PC-3 (cell line): ENCODE measurements at regions of chr3 and their contacts with region 1.

Region 1: DNA sequence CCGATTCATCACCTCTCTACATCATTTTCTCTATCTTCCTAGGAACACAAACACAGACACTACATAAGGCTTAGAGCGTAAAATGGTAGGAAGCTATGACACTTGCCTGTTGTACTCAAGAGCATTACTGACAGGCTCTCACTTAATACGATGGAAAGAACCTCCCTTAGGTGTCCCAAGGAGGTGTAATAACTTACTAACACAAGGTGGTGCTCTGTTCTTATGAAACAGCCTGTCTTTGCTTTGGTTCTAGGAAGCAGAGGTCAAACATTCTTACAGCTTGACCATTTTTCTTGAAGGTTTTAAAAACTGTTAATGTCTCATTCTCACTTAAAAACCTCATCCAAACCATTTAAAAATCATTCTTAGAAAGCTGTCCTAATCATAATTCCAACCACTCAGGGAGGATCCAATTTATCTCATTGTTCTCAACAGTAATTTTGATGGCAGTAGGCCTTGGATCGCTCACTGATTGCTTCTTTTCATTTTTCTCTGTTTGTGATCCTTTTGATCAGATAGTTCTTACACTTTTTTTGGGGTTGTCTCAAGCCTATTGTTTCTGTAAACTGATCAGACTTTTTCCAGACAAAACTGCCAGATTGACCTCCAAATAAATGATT is 317.8 kb upstream of the AGTR1 start:
- DNase-seq: peak; percentile 64
- ATAC-seq: peak; percentile 91
- H3K4me3 ChIP-seq: no peak overlapping the region
- H3K27ac ChIP-seq: no peak overlapping the region
- H3K4me1 ChIP-seq: no peaks in the 10 kb centered on the region
- H3K27me3 ChIP-seq: no peaks in the 10 kb centered on the region
- CTCF ChIP-seq: peak; percentile 63

Region 2: DNA sequence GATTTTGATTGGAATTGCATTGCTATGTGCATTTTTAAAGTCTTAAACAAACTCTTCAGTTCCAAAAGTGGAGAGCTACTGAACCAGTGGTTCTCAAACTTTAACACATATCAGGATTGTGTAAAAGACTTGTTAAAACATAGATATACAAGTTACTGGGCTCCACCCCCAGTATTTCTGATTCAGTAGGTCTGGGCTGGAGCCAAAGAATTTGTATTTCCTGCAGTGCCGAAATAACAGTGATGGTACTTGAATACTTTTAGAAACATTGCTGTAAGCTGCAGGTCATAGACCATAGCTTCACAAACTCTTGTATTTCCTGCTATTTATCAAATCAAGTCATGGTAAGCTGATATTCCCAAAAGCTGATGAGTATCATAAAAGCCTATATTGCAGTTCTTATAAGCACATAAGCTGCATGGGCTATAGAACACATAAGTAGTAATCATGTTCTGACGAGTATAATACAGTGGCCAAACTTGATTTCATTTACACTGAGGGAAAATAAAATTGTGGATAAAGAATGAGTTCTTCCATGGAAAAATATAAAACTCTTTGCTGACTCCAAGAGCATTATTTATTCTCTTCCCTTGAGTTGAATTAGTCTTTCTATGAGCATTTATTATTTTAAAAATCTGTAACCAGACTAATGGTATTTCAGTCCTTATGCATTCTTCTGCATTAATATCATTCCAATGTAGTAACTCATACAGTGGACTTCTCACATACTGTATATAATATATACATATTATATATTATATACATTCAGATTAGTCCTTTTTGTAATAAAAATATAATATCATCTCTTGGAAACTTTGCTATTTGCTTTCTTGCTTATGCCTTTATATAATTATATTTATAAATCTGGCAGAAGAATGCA is 232.7 kb before region 1 on chr3:
- CTCF ChIA-PET with region 1: no interaction called
- POLR2A ChIA-PET with region 1: no interaction called
- intact Hi-C with region 1: no loop called
- DNase-seq: peak; percentile 30
- ATAC-seq: peak; percentile 42; the same call in 1 of the 2 replicates
- H3K4me3 ChIP-seq: no peak overlapping the region
- H3K27ac ChIP-seq: no peak overlapping the region
- H3K4me1 ChIP-seq: no peaks in the 10 kb centered on the region; the same call in 1 of the 2 replicates
- H3K27me3 ChIP-seq: no peaks in the 10 kb centered on the region
- CTCF ChIP-seq: no peak

Region 3: GRCh38 chr3:148309390-148310035 is 70.4 kb before region 1 on chr3:
- CTCF ChIA-PET with region 1: no interaction called
- POLR2A ChIA-PET with region 1: no interaction called
- intact Hi-C with region 1: no loop called
- DNase-seq: peak; percentile 57
- ATAC-seq: peak; percentile 89
- H3K4me3 ChIP-seq: no peak overlapping the region
- H3K27ac ChIP-seq: no peak overlapping the region
- H3K4me1 ChIP-seq: no peaks in the 10 kb centered on the region
- H3K27me3 ChIP-seq: no peaks in the 10 kb centered on the region
- CTCF ChIP-seq: peak; percentile 87

Region 4: GRCh38 chr3:148718982-148719862 is 339.3 kb after region 1 on chr3:
- CTCF ChIA-PET with region 1: interaction called, 3 read pairs
- POLR2A ChIA-PET with region 1: no interaction called
- intact Hi-C with region 1: loop called (anchors 1 kb)
- DNase-seq: peak; percentile 26
- ATAC-seq: no peak; the same call in 1 of the 2 replicates
- H3K4me3 ChIP-seq: no peak overlapping the region
- H3K27ac ChIP-seq: no peak overlapping the region
- H3K4me1 ChIP-seq: no peaks in the 10 kb centered on the region
- H3K27me3 ChIP-seq: peaks cover 23% of the 10 kb centered on the region; the same call in 1 of the 2 replicates
- CTCF ChIP-seq: peak; percentile 69

Region 5: GRCh38 chr3:148861277-148861869 is 481.5 kb after region 1 on chr3:
- CTCF ChIA-PET with region 1: no interaction called
- POLR2A ChIA-PET with region 1: no interaction called
- intact Hi-C with region 1: loop called (anchors 5 kb)
- DNase-seq: peak; percentile 72
- ATAC-seq: peak; percentile 70
- H3K4me3 ChIP-seq: no peak overlapping the region
- H3K27ac ChIP-seq: no peak overlapping the region
- H3K4me1 ChIP-seq: no peaks in the 10 kb centered on the region
- H3K27me3 ChIP-seq: peaks cover 47% of the 10 kb centered on the region
- CTCF ChIP-seq: peak; percentile 90